PC-3 (cell line): ENCODE measurements at regions of chr3 and their contacts with region 1.

Region 1: GRCh38 chr3:149581681-149582370 is 76.0 kb downstream of the WWTR1 start:
- DNase-seq: peak; percentile 97
- ATAC-seq: peak; percentile 40
- H3K4me3 ChIP-seq: peak overlapping the region; percentile 53
- H3K27ac ChIP-seq: peak overlapping the region; percentile 99
- H3K4me1 ChIP-seq: peaks cover 91% of the 10 kb centered on the region
- H3K27me3 ChIP-seq: no peaks in the 10 kb centered on the region
- CTCF ChIP-seq: no peak

Region 2: DNA sequence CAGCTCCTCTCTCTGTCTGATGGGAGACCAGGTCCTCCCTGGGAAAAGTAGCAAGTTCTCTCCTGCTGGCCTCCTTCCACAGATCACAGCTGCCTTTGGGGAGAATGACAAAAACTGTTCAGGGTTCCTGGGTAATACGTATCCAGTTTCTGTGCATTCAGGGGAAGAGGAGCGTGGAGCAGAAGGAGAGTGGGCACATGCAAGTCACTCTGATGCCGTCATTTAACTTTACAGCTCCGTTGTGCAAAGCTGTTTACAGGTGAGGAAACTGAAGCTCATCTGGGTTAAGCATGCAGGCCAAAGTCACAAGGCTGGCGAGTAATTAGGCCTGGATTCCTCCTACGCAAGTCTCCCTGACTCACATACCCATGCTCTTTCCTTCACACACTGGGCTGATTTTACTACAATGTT is 196.9 kb before region 1 on chr3:
- CTCF ChIA-PET with region 1: no interaction called
- POLR2A ChIA-PET with region 1: no interaction called
- intact Hi-C with region 1: loop called (anchors 2 kb)
- DNase-seq: peak; percentile 47
- ATAC-seq: no peak
- H3K4me3 ChIP-seq: no peak overlapping the region
- H3K27ac ChIP-seq: peak overlapping the region; percentile 99
- H3K4me1 ChIP-seq: peaks cover 77% of the 10 kb centered on the region
- H3K27me3 ChIP-seq: no peaks in the 10 kb centered on the region
- CTCF ChIP-seq: no peak

Region 3: DNA sequence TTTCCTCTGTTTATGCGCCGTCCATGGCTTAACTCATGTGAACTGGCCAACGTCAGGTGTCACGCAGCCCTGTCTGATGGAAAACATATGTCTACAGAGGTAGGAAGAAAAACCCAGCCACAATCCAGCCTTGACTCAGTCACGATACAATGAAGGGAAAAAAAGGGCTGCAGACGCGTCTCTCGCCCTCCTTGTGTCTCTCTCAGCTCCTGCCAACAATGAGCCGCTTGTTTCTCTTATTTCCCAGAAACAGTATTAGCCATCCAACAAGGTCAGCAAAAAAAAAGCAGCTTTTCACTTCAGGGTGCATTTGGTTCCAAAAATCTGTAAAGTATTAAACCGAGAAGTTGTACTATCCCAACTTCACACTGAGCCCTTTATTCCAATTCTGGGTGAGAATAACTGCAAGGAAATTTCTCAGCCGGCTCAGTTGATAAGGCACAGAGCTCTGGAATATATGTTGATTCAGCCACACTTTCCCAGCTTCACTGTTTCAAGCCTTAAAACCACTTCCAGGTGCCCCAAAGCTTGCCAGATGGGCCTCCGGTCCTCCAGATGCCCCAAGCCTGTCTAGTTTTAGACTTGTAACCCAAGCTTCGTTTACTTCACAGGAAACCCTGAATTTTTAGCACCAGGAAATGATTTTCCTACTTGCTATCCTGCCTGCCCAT is 27.9 kb before region 1 on chr3:
- CTCF ChIA-PET with region 1: interaction called, 4 read pairs
- POLR2A ChIA-PET with region 1: interaction called, 10 read pairs
- intact Hi-C with region 1: loop called (anchors 1 kb)
- DNase-seq: no peak
- ATAC-seq: no peak
- H3K4me3 ChIP-seq: peak overlapping the region; percentile 16; the same call in 1 of the 2 replicates
- H3K27ac ChIP-seq: peak overlapping the region; percentile 93
- H3K4me1 ChIP-seq: peaks cover 51% of the 10 kb centered on the region
- H3K27me3 ChIP-seq: no peaks in the 10 kb centered on the region
- CTCF ChIP-seq: no peak

Region 4: GRCh38 chr3:149596136-149596770 is 14.4 kb after region 1 on chr3:
- CTCF ChIA-PET with region 1: no interaction called
- POLR2A ChIA-PET with region 1: interaction called, 15 read pairs
- intact Hi-C with region 1: no loop called
- DNase-seq: no peak
- ATAC-seq: peak; percentile 50
- H3K4me3 ChIP-seq: no peak overlapping the region
- H3K27ac ChIP-seq: no peak overlapping the region
- H3K4me1 ChIP-seq: peaks cover 7% of the 10 kb centered on the region; the same call in 1 of the 2 replicates
- H3K27me3 ChIP-seq: no peaks in the 10 kb centered on the region
- CTCF ChIP-seq: no peak

Region 5: GRCh38 chr3:149848238-149848637 is 266.4 kb after region 1 on chr3:
- CTCF ChIA-PET with region 1: no interaction called
- POLR2A ChIA-PET with region 1: no interaction called
- intact Hi-C with region 1: no loop called
- DNase-seq: no peak
- ATAC-seq: no peak
- H3K4me3 ChIP-seq: no peak overlapping the region
- H3K27ac ChIP-seq: no peak overlapping the region
- H3K4me1 ChIP-seq: peaks cover 21% of the 10 kb centered on the region
- H3K27me3 ChIP-seq: no peaks in the 10 kb centered on the region
- CTCF ChIP-seq: no peak